GM12878 (cell line): ENCODE measurements at regions of chr2 and their contacts with region 1.

Region 1: DNA sequence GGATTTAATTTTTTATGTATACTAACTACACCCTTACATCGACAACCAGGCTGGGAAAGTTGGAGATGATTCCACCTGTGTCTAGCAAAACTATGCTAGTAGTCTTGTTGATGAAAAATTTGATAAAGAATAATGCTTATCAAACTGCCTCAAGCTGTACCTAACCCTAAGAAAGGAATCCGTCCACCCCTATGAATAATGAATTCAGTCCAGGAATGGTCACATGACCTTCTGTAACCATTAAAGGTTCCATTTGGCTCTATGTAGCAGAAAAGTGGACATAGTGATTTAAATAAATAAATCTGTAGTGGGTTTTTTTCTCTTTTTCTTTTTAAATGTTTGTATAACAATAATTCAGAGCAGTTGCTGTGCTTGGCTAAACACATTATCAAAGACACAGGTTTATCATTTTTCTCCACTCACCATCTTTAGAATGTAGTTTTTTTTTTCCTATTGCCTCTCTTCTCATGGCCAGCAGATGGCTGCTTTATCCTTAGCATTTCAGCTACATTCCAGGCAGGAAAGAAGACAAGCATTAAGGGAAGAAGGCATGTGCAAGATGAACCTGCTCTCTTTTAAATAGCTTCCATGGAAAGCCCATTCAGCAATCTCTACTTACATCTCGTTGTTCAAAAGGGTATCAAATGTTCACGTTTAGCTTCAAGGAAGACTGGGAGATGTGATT is 42.5 kb downstream of the ARHGAP15 start:
- DNase-seq: no peak
- ATAC-seq: no peak
- H3K4me3 ChIP-seq: no peak overlapping the region
- H3K27ac ChIP-seq: no peak overlapping the region
- H3K4me1 ChIP-seq: peaks cover 7% of the 10 kb centered on the region; the same call in 1 of the 2 replicates
- H3K27me3 ChIP-seq: no peaks in the 10 kb centered on the region
- CTCF ChIP-seq: no peak
- EP300 ChIP-seq: no peak
- POLR2A ChIP-seq: no peak
- RAD21 ChIP-seq: no peak

Region 2: GRCh38 chr2:143183804-143184463 is 12.3 kb after region 1 on chr2:
- CTCF ChIA-PET with region 1: interaction called, 14 read pairs
- POLR2A ChIA-PET with region 1: interaction called, 4 read pairs
- RAD21 ChIA-PET with region 1: no interaction called
- SMC1A ChIA-PET with region 1: interaction called, 4 read pairs
- in situ Hi-C with region 1: no loop called
- intact Hi-C with region 1: no loop called
- DNase-seq: peak; percentile 27
- ATAC-seq: peak; percentile 80
- H3K4me3 ChIP-seq: no peak overlapping the region
- H3K27ac ChIP-seq: peak overlapping the region; percentile 6; the same call in 1 of the 2 replicates
- H3K4me1 ChIP-seq: peaks cover 9% of the 10 kb centered on the region
- H3K27me3 ChIP-seq: no peaks in the 10 kb centered on the region
- CTCF ChIP-seq: no peak
- EP300 ChIP-seq: no peak
- POLR2A ChIP-seq: no peak
- RAD21 ChIP-seq: no peak